ENCODE measurements at regions of chr10 and their contacts with region 1.

Region 1: DNA sequence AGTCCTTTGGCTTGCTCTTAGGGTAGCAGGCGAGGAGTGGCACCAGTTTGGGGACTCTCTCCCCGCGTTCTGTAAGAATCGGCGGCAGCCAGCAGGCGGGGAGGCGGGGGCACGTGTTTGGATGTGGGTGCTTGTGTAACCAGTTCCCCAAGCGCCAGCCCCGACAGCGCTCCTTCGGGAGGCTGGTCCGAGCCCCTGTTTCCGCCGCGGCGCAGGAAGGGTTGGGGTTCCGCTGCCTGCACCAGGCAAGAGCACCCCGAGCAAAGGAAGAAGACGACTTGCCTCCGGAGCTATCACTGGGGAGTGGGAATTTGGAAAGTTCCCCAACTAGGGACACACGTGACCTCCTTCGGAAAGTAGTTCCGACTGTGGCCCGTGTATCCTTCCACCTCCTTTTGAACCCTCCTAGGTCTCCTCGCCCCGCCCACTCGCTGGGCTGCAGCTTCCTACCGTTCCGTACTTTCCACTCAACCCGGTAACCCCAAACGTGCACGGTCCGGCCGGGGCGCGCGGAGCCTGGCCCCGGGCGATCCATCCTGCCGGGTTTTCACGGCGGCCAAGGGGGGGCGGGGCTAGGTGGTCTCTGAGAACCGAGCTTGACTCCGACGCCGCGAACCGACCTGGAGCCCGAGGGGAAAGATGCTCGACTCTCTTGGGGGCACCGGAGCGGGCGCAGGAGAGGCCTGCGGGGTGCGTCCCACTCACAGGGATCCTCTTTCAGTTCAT is 1.2 kb downstream of the KLLN start:
- DNase-seq: peak; percentile 98
- ATAC-seq: peak; percentile 91

Region 2: GRCh38 chr10:87817609-87818504 is 44.3 kb before region 1 on chr10 and contains the start of gene ATAD1:
- intact Hi-C with region 1: loop called (anchors 5 kb)
- DNase-seq: peak; percentile 91
- ATAC-seq: peak; percentile 96
- total RNA-seq, gene ATAD1: 98.2 TPM

Region 3: GRCh38 chr10:88064608-88065382 is 202.7 kb after region 1 on chr10:
- intact Hi-C with region 1: loop called (anchors 10 kb)
- DNase-seq: peak; percentile 79
- ATAC-seq: peak; percentile 28

Region 4: DNA sequence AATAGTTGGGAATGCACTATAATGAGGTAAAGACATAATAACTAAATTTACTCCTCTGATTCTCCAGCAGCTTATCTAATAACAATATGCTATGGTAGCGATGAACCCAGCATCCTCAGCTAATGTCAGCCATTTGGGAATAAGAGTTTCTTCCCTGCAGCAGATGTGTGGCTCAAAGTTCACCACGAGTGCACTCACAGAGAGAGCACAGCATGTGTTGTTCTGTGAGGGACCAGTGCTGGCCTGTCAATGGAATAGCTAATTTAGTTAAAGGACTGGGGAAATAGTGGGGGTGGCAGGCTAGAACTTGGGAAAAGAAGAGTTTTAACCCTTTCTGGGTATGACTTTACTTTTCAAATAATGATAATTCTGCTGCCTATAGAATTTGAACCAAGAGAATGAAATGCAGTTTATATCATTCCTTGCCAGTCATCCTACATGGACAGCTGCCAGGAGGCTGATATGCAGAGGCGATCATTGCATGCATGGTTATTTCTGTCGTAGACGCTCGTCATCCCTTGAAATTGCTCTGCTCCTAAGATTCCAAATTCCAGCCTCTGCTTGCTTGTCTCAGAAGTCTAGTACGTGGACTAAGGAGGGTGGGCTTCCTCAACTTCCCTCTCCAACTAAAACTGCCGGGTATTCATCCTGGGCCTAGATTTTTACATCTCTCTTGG is 365.4 kb after region 1 on chr10:
- intact Hi-C with region 1: loop called (anchors 5 kb)
- DNase-seq: peak; percentile 71
- ATAC-seq: peak; percentile 88

Region 5: GRCh38 chr10:88386821-88387773 is 525.0 kb after region 1 on chr10:
- intact Hi-C with region 1: loop called (anchors 2 kb)
- DNase-seq: no peak
- ATAC-seq: peak; percentile 86

Measured in Right ventricle myocardium inferior (tissue), 1 donor.